Activated CD4-positive, alpha-beta T cell treated with anti-CD3 and anti-CD28 coated beads, Interleukin-2, amount 10 ng/mL, durations not matched to agents 24 days and 14 days (primary cell): ENCODE measurements at regions of chr1 and their contacts with region 1.

Region 1: DNA sequence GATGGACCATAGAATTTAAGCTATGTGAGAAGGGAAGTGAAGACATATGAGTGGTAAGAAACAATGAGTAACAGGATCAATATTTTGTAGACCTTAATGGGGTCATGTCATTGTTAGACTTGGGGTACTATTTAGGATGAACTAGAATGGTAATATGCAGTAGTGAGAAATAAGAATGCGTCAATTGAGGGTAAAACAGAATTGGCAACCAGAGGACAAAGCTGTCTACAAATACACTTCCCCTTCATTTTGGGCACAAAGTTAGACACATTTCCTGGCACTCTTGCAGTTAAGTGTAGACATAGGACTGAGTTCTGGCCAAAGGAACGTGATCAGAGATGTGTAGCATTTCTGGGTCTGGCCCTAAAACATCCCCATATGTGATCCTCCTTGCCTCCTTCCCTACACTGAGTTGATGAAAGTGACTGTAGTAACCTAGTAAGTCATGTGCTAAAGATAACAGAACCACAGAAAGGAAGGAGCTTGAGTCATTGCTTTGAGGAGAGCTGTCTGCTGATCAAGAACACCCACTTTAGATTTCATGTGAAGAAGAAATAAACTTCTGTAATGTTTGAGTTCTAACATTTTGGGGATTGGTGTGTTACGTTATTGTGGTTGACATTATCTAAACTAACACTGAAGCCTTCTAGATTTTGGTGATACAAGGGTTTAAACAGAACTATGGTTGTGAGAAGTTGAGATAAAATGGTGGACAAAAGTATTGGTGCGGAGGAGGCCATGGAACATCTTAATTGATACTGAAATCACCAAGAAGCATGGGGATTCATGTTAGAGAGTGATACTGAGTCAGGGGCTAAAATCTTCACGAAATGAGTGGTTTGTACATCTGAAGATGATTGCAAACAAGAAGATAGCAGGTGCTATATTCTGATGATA is 41.7 kb downstream of the CD55 start:
- DNase-seq: peak; percentile 79
- H3K4me3 Mint-ChIP-seq: no peak overlapping the region
- H3K27ac Mint-ChIP-seq: no peak overlapping the region
- H3K4me1 Mint-ChIP-seq: peaks cover 3% of the 10 kb centered on the region
- H3K27me3 Mint-ChIP-seq: no peaks in the 10 kb centered on the region

Region 2: DNA sequence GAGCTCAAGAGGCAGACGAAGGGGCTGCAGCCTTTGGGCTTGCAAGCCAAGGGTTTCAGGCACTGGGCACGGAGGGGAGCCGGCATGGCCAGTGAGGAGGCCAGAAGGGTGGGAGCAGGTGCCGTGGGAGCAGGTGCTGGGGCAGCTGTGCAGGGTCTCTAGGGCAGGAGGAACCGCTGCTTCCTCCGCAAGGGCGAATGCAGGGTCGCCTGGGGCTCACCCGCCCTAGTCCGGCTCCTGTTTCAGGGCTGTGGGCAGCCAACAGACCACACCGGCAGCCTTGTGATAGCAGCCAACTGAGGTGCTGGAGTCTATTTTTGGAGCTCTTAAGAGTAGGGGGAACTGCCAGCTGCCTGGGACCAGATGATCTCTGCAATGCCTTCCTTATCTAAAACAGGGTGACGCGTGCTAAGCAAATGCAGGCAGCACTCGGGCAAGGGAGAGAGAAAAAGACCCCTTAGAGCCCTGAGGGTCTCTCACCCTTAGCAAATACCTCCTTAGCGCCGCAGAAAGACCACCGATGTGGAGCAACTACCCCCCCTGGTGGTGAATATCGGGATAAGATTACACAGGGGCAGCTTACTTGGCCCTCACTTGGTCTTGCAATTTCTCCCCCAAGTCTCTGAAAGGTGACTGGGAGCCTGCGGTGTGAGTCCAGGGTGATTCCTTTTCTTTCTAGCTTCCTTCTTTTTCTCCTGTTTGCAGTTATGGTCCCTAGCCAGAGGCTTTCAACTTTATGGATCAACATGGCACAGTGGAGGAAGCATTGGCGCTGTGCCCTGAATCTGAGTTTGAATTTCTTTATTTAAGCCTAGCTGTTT is 699.2 kb before region 1 on chr1:
- intact Hi-C with region 1: no loop called
- DNase-seq: peak; percentile 92
- H3K4me3 Mint-ChIP-seq: peak overlapping the region; percentile 57
- H3K27ac Mint-ChIP-seq: peak overlapping the region; percentile 39
- H3K4me1 Mint-ChIP-seq: peaks cover 34% of the 10 kb centered on the region
- H3K27me3 Mint-ChIP-seq: peaks cover 2% of the 10 kb centered on the region

Region 3: DNA sequence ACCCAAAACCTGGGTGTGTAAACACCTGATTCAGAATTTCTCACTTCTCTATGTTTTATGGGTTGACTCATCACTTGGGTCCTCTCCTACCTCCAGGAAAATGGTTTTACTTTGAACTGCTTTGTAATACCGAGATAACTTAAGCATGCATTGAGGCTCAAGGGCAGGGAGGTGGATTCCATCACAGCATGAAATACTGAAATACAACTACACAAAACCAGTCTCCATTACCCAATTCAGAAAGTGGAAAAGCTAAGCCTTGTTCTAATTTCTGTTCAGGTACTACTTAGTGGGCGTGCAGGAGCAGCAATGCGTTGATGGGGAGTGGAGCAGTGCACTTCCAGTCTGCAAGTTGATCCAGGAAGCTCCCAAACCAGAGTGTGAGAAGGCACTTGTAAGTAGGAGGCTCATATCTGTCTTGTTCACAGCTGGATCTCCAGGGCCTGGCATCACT is 265.3 kb before region 1 on chr1:
- intact Hi-C with region 1: loop called (anchors 1 kb)
- DNase-seq: peak; percentile 75
- H3K4me3 Mint-ChIP-seq: peak overlapping the region; percentile 29
- H3K27ac Mint-ChIP-seq: peak overlapping the region; percentile 86
- H3K4me1 Mint-ChIP-seq: peaks cover 23% of the 10 kb centered on the region
- H3K27me3 Mint-ChIP-seq: peaks cover 9% of the 10 kb centered on the region

Region 4: GRCh38 chr1:207321079-207321789 is 42.0 kb before region 1 on chr1 and contains the start of gene CD55:
- intact Hi-C with region 1: loop called (anchors 1 kb)
- DNase-seq: peak; percentile 100
- H3K4me3 Mint-ChIP-seq: peak within 1 kb of the TSS; percentile 98
- H3K27ac Mint-ChIP-seq: peak within 1 kb of the TSS; percentile 100
- H3K4me1 Mint-ChIP-seq: peaks cover 35% of the 10 kb centered on the region
- H3K27me3 Mint-ChIP-seq: peaks cover 3% of the 10 kb centered on the region
- total RNA-seq, gene CD55: 133 and 142 TPM in 2 replicates

Region 5: GRCh38 chr1:207389740-207390464 is 26.7 kb after region 1 on chr1:
- intact Hi-C with region 1: loop called (anchors 1 kb)
- DNase-seq: no peak
- H3K4me3 Mint-ChIP-seq: no peak overlapping the region
- H3K27ac Mint-ChIP-seq: peak overlapping the region; percentile 82
- H3K4me1 Mint-ChIP-seq: peaks cover 8% of the 10 kb centered on the region
- H3K27me3 Mint-ChIP-seq: no peaks in the 10 kb centered on the region

Region 6: DNA sequence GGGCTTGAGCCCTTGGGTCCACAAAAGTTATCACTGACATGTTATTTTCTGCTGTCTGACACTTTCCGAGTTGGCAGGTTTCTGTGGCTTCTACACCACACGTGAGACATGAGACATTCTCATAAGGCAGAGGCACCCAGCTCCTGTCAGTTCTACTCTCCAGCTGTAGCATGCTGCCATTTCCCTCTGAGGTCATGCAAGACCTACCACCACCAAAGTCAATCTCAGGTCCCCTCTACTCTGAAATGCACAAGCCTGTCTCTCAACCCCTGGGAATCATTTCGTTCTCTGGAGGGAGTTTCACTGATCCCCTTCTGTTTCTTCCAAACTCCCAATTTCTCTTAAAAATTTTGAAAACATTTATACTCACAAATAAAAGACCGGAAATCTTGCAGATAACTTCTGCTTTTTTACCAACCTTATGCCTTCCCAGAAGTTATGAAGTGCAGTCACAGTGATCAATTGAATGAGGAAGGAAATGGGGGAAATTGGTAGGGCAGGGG is 51.4 kb after region 1 on chr1:
- intact Hi-C with region 1: loop called (anchors 1 kb)
- DNase-seq: peak; percentile 69
- H3K4me3 Mint-ChIP-seq: peak overlapping the region; percentile 12
- H3K27ac Mint-ChIP-seq: peak overlapping the region; percentile 45
- H3K4me1 Mint-ChIP-seq: peaks cover 26% of the 10 kb centered on the region
- H3K27me3 Mint-ChIP-seq: peaks cover 9% of the 10 kb centered on the region